OCI-LY7 (cell line): ENCODE measurements at regions of chr10 and their contacts with region 1.

Region 1: GRCh38 chr10:5776136-5776880 is 36.9 kb downstream of the GDI2 start:
- DNase-seq: no peak
- H3K4me3 ChIP-seq: no peak overlapping the region
- H3K27ac ChIP-seq: peak overlapping the region; percentile 2
- H3K4me1 ChIP-seq: peaks cover 18% of the 10 kb centered on the region
- CTCF ChIP-seq: no peak

Region 2: DNA sequence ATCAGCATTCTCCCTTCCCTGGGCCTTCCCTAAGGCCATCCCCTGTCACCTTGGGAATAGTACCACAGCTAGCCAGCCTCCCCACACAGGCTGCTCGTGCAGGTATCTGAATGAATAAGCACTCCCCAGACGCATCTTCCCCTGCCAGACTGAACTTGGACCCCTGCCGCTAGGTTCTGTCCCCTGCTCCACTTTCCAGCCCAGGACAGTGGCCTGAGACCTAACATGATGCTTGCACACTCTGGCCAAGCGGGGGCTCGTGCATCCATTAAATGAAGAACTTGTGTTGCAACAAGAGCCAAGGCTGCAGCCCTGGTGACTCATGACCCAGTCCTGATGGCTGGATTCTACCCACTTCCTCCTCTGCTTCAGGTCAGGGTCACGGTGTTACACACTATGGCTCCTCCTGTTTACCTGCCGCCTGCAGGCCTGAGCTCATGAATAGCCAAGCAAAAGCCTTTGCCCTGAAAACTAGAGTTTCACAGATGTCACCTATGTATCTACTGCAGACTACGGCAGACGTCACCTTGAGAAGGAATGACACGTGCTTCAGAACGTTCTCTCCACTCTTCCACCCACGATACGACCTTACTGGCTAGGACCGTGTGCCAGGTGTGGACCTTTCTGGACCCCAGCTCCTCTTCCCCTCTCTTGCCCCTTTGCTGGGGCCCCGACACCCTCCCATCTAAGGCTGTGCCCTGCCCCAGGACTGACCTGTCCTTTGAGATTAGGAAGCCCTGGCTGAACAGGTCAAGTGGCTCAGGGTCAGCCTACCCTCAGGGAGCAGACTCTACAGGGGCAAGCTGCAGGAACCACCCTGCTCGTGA is 116.4 kb before region 1 on chr10:
- CTCF ChIA-PET with region 1: no interaction called
- POLR2A ChIA-PET with region 1: no interaction called
- intact Hi-C with region 1: no loop called
- DNase-seq: peak; percentile 83
- H3K4me3 ChIP-seq: peak overlapping the region; percentile 30
- H3K27ac ChIP-seq: peak overlapping the region; percentile 100
- H3K4me1 ChIP-seq: peaks cover 98% of the 10 kb centered on the region
- CTCF ChIP-seq: no peak

Region 3: GRCh38 chr10:5889624-5890451 is 113.5 kb after region 1 on chr10 and contains the starts of genes ANKRD16 and FBH1:
- CTCF ChIA-PET with region 1: no interaction called
- POLR2A ChIA-PET with region 1: no interaction called
- intact Hi-C with region 1: loop called (anchors 5 kb)
- DNase-seq: peak; percentile 99
- H3K4me3 ChIP-seq: peak within 1 kb of the TSS; percentile 88
- H3K27ac ChIP-seq: peak within 1 kb of the TSS; percentile 35
- H3K4me1 ChIP-seq: peaks cover 26% of the 10 kb centered on the region
- CTCF ChIP-seq: no peak
- total RNA-seq, gene ANKRD16: 7.9 and 15.2 TPM in 2 replicates
- total RNA-seq, gene FBH1: 61.9 and 65.6 TPM in 2 replicates